B cell (primary cell): ENCODE measurements at regions of chr12 and their contacts with region 1.

Region 1: GRCh38 chr12:11719678-11720099 is 70.2 kb downstream of the ETV6 start:
- DNase-seq: no peak
- ATAC-seq: no peak
- H3K4me3 ChIP-seq: no peak overlapping the region
- H3K4me3 Mint-ChIP-seq: no peak overlapping the region
- H3K27ac ChIP-seq: no peak overlapping the region
- H3K27ac Mint-ChIP-seq: no peak overlapping the region
- H3K4me1 ChIP-seq: peaks cover 12 to 26% of the 10 kb centered on the region in 2 donors
- H3K4me1 Mint-ChIP-seq: peaks cover 66% of the 10 kb centered on the region
- H3K27me3 ChIP-seq: no peaks in the 10 kb centered on the region
- H3K27me3 Mint-ChIP-seq: no peaks in the 10 kb centered on the region
- CTCF ChIP-seq: no peak

Region 2: DNA sequence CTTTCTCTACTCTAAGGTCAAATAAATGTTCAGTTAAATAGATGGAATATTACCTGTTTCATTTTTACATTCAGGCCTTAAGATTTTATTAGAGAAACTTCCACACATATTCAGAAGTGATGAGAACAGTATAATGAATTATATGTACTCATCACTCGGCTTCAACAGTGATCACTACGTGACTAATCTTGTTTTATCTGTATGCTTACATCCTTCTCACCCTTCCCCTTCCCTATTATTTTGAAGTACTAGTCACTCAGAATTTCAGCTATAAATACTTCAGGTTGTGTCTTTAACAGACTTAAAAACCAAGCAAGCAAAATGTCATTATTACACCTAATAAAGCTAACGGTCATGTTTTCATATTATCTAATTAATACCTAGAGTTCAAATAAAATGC is 35.3 kb before region 1 on chr12:
- CTCF ChIA-PET with region 1: no interaction called
- POLR2A ChIA-PET with region 1: no interaction called
- intact Hi-C with region 1: loop called (anchors 5 kb)
- DNase-seq: no peak
- ATAC-seq: no peak
- H3K4me3 ChIP-seq: no peak overlapping the region
- H3K4me3 Mint-ChIP-seq: no peak overlapping the region
- H3K27ac ChIP-seq: no peak overlapping the region
- H3K27ac Mint-ChIP-seq: no peak overlapping the region
- H3K4me1 ChIP-seq: peaks cover 6 to 8% of the 10 kb centered on the region in 2 donors
- H3K4me1 Mint-ChIP-seq: peaks cover 63% of the 10 kb centered on the region
- H3K27me3 ChIP-seq: no peaks in the 10 kb centered on the region
- H3K27me3 Mint-ChIP-seq: no peaks in the 10 kb centered on the region
- CTCF ChIP-seq: no peak